ENCODE measurements at regions of chr5 and their contacts with region 1.

Region 1: GRCh38 chr5:134289509-134290113 is 63.7 kb upstream of the PPP2CA start:
- DNase-seq: peak in 4 of 5 donors; percentile 26 to 56 (median 42)
- H3K4me3 ChIP-seq: no peak overlapping the region
- H3K27ac ChIP-seq: no peak overlapping the region
- H3K4me1 ChIP-seq: no peaks in the 10 kb centered on the region
- H3K27me3 ChIP-seq: no peaks in the 10 kb centered on the region
- CTCF ChIP-seq: peak; percentile 40 to 81 (median 76)
- EP300 ChIP-seq: no peak
- POLR2A ChIP-seq: no peak

Region 2: GRCh38 chr5:134184155-134185135 is 105.2 kb before region 1 on chr5:
- intact Hi-C with region 1: loop called in 3 of 4 experiments (anchors 2 to 5 kb)
- DNase-seq: peak; percentile 62 to 76 (median 73)
- H3K4me3 ChIP-seq: no peak overlapping the region
- H3K27ac ChIP-seq: no peak overlapping the region
- H3K4me1 ChIP-seq: no peaks in the 10 kb centered on the region
- H3K27me3 ChIP-seq: no peaks in the 10 kb centered on the region
- CTCF ChIP-seq: peak; percentile 72 to 79 (median 77)
- EP300 ChIP-seq: no peak
- POLR2A ChIP-seq: no peak

Region 3: DNA sequence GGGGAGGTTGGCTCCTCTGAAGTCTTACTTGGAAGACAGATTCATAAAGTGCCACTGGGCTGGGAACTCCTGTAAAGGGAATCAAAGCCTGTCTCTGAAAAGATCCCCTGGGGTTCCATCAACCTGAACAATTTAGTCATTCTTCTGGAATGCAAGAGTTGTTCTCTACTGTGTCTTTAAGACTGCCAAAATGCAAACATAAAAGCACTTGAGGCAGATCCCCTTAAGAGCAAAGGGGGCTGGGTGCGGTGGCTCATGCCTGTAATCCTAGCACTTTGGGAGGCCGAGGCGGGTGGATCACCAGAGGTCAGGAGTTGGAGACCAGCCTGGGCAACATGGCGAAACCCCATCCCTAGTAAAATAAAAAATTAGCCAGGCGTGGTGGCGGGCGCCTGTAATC is 105.3 kb after region 1 on chr5:
- intact Hi-C with region 1: no loop called
- DNase-seq: no peak
- H3K4me3 ChIP-seq: no peak overlapping the region
- H3K27ac ChIP-seq: no peak overlapping the region
- H3K4me1 ChIP-seq: peaks cover 1% of the 10 kb centered on the region
- H3K27me3 ChIP-seq: no peaks in the 10 kb centered on the region
- CTCF ChIP-seq: no peak
- EP300 ChIP-seq: no peak
- POLR2A ChIP-seq: no peak

Region 4: DNA sequence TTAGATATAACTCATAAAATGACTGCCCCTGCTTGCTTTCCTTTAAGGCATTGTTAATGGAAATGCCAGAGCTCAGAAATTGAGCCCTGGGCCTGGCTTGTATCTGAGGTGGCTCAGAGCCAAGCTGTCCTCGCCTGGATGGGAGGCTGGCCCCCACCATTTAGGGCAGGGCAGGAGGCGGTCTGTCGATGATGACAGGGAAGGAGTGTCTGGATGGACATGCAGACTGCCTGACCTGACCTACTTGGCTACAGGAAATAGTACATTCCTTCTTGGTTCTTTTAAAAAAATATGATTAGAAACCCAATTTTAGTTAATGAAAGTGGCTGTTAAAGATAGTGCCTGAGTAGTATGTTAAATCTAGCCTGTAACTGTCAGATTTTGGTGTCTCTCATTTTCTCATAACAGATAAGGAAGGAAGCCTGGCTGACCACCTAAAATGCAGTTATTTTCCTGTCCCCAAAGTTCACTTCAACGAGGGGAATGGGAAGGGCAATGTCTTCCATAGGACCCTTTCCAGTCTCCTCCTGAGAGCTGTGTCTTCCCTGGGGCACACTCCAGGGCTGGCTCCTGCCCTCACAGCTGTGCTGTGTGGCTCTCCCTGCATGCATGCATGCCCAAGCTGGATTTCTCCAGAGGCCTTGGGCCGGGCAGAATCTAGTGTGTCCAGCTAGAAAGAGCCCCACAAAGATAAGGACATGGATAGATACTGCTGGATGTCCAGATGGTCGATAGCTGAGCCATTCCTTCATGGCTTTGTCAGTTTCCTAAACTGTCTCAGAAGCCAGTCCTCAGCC is 1067.1 kb after region 1 on chr5:
- intact Hi-C with region 1: no loop called
- DNase-seq: peak; percentile 59 to 76 (median 64)
- H3K4me3 ChIP-seq: no peak overlapping the region
- H3K27ac ChIP-seq: no peak overlapping the region
- H3K4me1 ChIP-seq: peaks cover 12% of the 10 kb centered on the region
- H3K27me3 ChIP-seq: no peaks in the 10 kb centered on the region
- CTCF ChIP-seq: no peak
- EP300 ChIP-seq: no peak
- POLR2A ChIP-seq: no peak